GM13977 (cell line): ENCODE measurements at regions of chr13 and their contacts with region 1.

Region 1: GRCh38 chr13:101624210-101624922 is 171.9 kb downstream of the ITGBL1 start:
- DNase-seq: no peak
- CTCF ChIP-seq: no peak

Region 2: DNA sequence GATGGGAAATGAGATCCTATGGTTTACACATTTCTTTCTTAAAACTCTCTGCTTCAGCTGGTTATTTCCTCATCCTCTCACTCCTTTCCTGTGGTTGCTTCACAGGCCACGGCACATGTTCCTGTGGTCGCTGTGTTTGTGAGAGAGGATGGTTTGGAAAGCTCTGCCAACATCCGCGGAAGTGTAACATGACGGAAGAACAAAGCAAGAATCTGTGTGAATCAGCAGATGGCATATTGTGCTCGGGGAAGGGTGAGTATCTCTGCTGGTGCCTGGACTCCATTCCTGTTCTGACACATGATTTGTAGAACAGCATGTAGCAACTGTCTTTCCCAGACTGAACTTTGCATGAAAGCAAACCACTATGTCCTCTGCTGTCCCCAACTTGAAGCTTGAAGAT is 82.3 kb after region 1 on chr13:
- in situ Hi-C with region 1: loop called (anchors 25 kb)
- DNase-seq: no peak
- CTCF ChIP-seq: no peak